Mammary epithelial cell (primary cell): ENCODE measurements at regions of chr2 and their contacts with region 1.

Region 1: GRCh38 chr2:113085542-113085941 is 17.8 kb downstream of the IL1F10 start:
- DNase-seq: peak; percentile 92
- H3K4me3 ChIP-seq: no peak overlapping the region
- H3K27ac ChIP-seq: peak overlapping the region; percentile 59
- H3K4me1 ChIP-seq: peaks cover 22% of the 10 kb centered on the region
- H3K27me3 ChIP-seq: no peaks in the 10 kb centered on the region
- CTCF ChIP-seq: peak in 1 of 2 donors; percentile 19

Region 2: GRCh38 chr2:113005030-113005509 is 80.5 kb before region 1 on chr2 and contains the start of gene IL36A:
- CTCF ChIA-PET with region 1: no interaction called
- dilution Hi-C with region 1: no loop called
- in situ Hi-C with region 1: no loop called
- intact Hi-C with region 1: no loop called
- DNase-seq: peak; percentile 9
- H3K4me3 ChIP-seq: no peak within 1 kb of the TSS
- H3K27ac ChIP-seq: no peak within 1 kb of the TSS
- H3K4me1 ChIP-seq: peaks cover 1% of the 10 kb centered on the region
- H3K27me3 ChIP-seq: no peaks in the 10 kb centered on the region
- CTCF ChIP-seq: no peak
- total RNA-seq, gene IL36A: not detected

Region 3: GRCh38 chr2:113211226-113212105 is 125.9 kb after region 1 on chr2:
- CTCF ChIA-PET with region 1: no interaction called
- dilution Hi-C with region 1: no loop called
- in situ Hi-C with region 1: no loop called
- intact Hi-C with region 1: no loop called
- DNase-seq: peak; percentile 75
- H3K4me3 ChIP-seq: no peak overlapping the region
- H3K27ac ChIP-seq: peak overlapping the region; percentile 65
- H3K4me1 ChIP-seq: peaks cover 20% of the 10 kb centered on the region
- H3K27me3 ChIP-seq: no peaks in the 10 kb centered on the region
- CTCF ChIP-seq: no peak

Region 4: GRCh38 chr2:113240150-113240862 is 154.8 kb after region 1 on chr2:
- CTCF ChIA-PET with region 1: no interaction called
- dilution Hi-C with region 1: no loop called
- in situ Hi-C with region 1: no loop called
- intact Hi-C with region 1: loop called (anchors 1 kb)
- DNase-seq: peak; percentile 95
- H3K4me3 ChIP-seq: peak overlapping the region in 2 of 3 experiments; percentile 2 to 12
- H3K27ac ChIP-seq: peak overlapping the region; percentile 95
- H3K4me1 ChIP-seq: peaks cover 29% of the 10 kb centered on the region
- H3K27me3 ChIP-seq: no peaks in the 10 kb centered on the region
- CTCF ChIP-seq: peak; percentile 16 to 19

Region 5: GRCh38 chr2:113260991-113261390 is 175.4 kb after region 1 on chr2:
- CTCF ChIA-PET with region 1: no interaction called
- dilution Hi-C with region 1: no loop called
- in situ Hi-C with region 1: no loop called
- intact Hi-C with region 1: no loop called
- DNase-seq: no peak
- H3K4me3 ChIP-seq: no peak overlapping the region
- H3K27ac ChIP-seq: no peak overlapping the region
- H3K4me1 ChIP-seq: no peaks in the 10 kb centered on the region
- H3K27me3 ChIP-seq: no peaks in the 10 kb centered on the region
- CTCF ChIP-seq: no peak